ENCODE measurements at regions of chr15 and their contacts with region 1.

Region 1: GRCh38 chr15:67863442-67863987 is 23.7 kb upstream of the RNU6-1 start:
- DNase-seq: peak; percentile 35 to 82 (median 69)
- ATAC-seq: peak; percentile 100
- H3K4me3 ChIP-seq: peak overlapping the region; percentile 13 to 27
- H3K4me3 Mint-ChIP-seq: peak overlapping the region; percentile 26
- H3K27ac ChIP-seq: no peak overlapping the region
- H3K27ac Mint-ChIP-seq: no peak overlapping the region
- H3K4me1 ChIP-seq: peaks cover 3% of the 10 kb centered on the region
- H3K4me1 Mint-ChIP-seq: peaks cover 3% of the 10 kb centered on the region
- H3K27me3 ChIP-seq: no peaks in the 10 kb centered on the region
- H3K27me3 Mint-ChIP-seq: peaks cover 9% of the 10 kb centered on the region
- CTCF ChIP-seq: peak; percentile 85

Region 2: GRCh38 chr15:67927501-67928168 is 64.1 kb after region 1 on chr15:
- CTCF ChIA-PET with region 1: no interaction called
- POLR2A ChIA-PET with region 1: no interaction called
- intact Hi-C with region 1: no loop called
- DNase-seq: no peak
- ATAC-seq: no peak
- H3K4me3 ChIP-seq: no peak overlapping the region
- H3K4me3 Mint-ChIP-seq: no peak overlapping the region
- H3K27ac ChIP-seq: no peak overlapping the region
- H3K27ac Mint-ChIP-seq: no peak overlapping the region
- H3K4me1 ChIP-seq: no peaks in the 10 kb centered on the region
- H3K4me1 Mint-ChIP-seq: no peaks in the 10 kb centered on the region
- H3K27me3 ChIP-seq: no peaks in the 10 kb centered on the region
- H3K27me3 Mint-ChIP-seq: peaks cover 5% of the 10 kb centered on the region
- CTCF ChIP-seq: no peak

Region 3: DNA sequence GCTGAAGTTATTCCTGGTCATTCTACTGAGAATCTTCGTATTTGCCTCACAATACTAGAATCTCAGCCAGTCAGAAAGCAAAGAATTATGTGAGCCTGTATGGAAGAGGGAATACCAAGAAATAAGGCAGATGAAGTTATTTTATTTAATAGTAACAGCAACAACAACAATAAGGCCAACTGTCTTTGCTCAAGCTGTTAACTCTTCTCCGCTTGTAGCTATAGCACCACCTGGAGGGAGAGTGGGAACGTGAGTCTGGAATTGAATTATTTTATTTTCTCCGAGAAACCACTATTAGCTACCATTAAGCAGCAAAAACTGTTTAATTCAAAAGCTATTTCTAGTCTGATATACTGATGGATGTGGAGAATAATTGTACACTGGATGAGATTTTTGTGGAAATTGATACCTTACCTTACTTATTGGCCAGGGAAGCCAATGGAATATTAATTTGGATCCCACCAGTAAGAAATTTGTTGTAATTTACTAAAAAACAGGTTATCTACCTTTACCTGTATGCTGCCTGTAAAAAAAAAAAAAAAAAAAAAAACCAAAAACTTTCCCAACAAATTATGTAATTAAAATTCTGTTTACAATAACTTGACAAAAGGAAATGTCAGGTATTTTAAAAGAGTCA is 291.5 kb after region 1 on chr15:
- CTCF ChIA-PET with region 1: interaction called, 29 read pairs
- POLR2A ChIA-PET with region 1: no interaction called
- intact Hi-C with region 1: loop called (anchors 1 kb)
- DNase-seq: peak in 4 of 9 experiments; percentile 12 to 46 (median 24)
- ATAC-seq: no peak
- H3K4me3 ChIP-seq: no peak overlapping the region
- H3K4me3 Mint-ChIP-seq: no peak overlapping the region
- H3K27ac ChIP-seq: no peak overlapping the region
- H3K27ac Mint-ChIP-seq: no peak overlapping the region
- H3K4me1 ChIP-seq: no peaks in the 10 kb centered on the region
- H3K4me1 Mint-ChIP-seq: peaks cover 3% of the 10 kb centered on the region
- H3K27me3 ChIP-seq: no peaks in the 10 kb centered on the region
- H3K27me3 Mint-ChIP-seq: no peaks in the 10 kb centered on the region
- CTCF ChIP-seq: peak; percentile 48

Region 4: GRCh38 chr15:68210821-68211655 is 347.5 kb after region 1 on chr15:
- CTCF ChIA-PET with region 1: interaction called, 6 read pairs
- POLR2A ChIA-PET with region 1: no interaction called
- intact Hi-C with region 1: loop called in 1 of 2 experiments (anchors 1 kb)
- DNase-seq: peak; percentile 19 to 68 (median 52)
- ATAC-seq: peak; percentile 50
- H3K4me3 ChIP-seq: no peak overlapping the region
- H3K4me3 Mint-ChIP-seq: no peak overlapping the region
- H3K27ac ChIP-seq: no peak overlapping the region
- H3K27ac Mint-ChIP-seq: no peak overlapping the region
- H3K4me1 ChIP-seq: peaks cover 16% of the 10 kb centered on the region
- H3K4me1 Mint-ChIP-seq: peaks cover 17% of the 10 kb centered on the region
- H3K27me3 ChIP-seq: no peaks in the 10 kb centered on the region
- H3K27me3 Mint-ChIP-seq: no peaks in the 10 kb centered on the region
- CTCF ChIP-seq: peak; percentile 52